PC-9 (cell line): ENCODE measurements at regions of chr9 and their contacts with region 1.

Region 1: DNA sequence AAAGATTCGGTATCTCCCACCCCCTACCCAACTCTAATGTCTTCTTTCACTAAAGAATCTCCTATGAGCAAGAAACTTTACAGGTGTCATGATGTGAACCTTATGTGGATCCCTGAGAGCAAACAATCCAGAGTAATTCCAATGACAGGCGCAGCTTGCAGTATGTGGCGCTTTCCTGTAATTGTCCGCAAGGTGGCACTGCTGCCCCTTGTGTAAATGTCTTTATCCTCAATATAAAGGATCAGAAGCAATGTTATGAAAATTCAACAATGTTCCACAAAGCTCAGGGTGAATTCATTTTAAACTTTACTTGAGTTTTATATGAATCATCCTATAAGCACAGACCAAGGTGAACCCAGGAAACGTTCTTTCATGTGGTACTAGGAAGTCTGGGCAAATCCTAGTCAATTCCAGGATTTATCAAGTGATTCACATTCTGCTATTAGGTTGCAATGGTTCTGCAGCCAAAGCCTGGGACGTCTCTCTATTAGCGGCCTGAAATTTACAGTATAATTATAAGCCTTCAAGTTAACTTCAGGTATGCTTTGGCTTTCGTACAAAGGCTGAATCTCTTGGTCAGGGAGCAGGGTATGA is 113.7 kb downstream of the TRPM6 start:
- DNase-seq: peak; percentile 46 to 70
- H3K4me3 ChIP-seq: no peak overlapping the region
- H3K27ac ChIP-seq: no peak overlapping the region
- H3K4me1 ChIP-seq: no peaks in the 10 kb centered on the region
- H3K27me3 ChIP-seq: no peaks in the 10 kb centered on the region
- CTCF ChIP-seq: peak; percentile 89

Region 2: DNA sequence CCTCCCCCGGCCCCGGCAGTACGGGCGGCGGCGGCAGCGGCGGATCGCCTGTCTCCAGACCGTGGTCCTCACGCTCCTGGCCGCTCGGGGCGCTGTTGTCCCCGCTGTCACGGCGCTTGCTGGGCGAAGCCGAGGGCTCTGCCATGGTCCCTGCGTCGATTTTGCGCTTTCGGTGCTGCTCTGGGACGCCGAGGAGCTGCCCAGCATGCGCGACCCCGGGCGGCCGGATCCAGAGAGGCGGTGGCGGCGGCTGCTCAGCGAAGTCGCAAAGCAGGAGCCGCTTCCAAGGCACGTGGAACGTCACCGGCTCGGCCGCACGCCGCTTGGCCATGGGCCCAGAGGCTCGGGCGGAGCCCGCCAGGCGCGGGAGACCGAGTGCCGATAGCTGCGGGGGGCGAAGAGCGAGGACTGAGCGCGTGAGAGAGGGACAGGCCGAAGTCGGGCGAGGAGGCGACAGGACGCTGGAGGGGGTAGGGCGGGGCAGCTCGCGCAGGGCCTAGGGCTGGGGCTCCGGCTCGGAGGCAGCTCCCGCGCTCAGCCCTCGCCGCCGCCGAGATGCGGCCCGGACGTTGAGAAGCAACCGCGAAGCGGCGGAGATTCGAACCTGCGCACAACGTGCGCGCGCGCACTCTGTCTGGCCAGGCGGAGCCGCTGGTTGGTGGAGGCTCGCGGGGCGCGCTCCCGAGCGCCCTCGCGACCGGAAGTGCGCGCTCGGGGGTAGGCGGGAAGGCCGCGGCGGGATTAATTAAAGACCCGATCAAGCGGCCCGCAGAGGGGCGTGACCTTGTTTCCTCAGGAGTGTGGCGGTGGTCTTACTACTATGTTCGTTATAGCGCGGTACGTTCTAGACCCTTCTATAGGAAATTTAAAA is 178.5 kb after region 1 on chr9 and contains the start of gene C9orf40:
- CTCF ChIA-PET with region 1: interaction called, 13 read pairs
- POLR2A ChIA-PET with region 1: no interaction called
- intact Hi-C with region 1: loop called (anchors 2 kb)
- DNase-seq: peak; percentile 66 to 89
- H3K4me3 ChIP-seq: peak within 1 kb of the TSS; percentile 97
- H3K27ac ChIP-seq: peak within 1 kb of the TSS; percentile 60
- H3K4me1 ChIP-seq: peaks cover 6% of the 10 kb centered on the region; the same call in 1 of the 2 replicates
- H3K27me3 ChIP-seq: no peaks in the 10 kb centered on the region
- CTCF ChIP-seq: peak; percentile 83
- total RNA-seq, gene C9orf40: 10.8 and 11.3 TPM in 2 replicates

Region 3: GRCh38 chr9:74983709-74984108 is 209.7 kb after region 1 on chr9:
- CTCF ChIA-PET with region 1: no interaction called
- POLR2A ChIA-PET with region 1: no interaction called
- intact Hi-C with region 1: loop called (anchors 5 kb)
- DNase-seq: no peak
- H3K4me3 ChIP-seq: no peak overlapping the region
- H3K27ac ChIP-seq: no peak overlapping the region
- H3K4me1 ChIP-seq: no peaks in the 10 kb centered on the region
- H3K27me3 ChIP-seq: no peaks in the 10 kb centered on the region
- CTCF ChIP-seq: no peak

Region 4: DNA sequence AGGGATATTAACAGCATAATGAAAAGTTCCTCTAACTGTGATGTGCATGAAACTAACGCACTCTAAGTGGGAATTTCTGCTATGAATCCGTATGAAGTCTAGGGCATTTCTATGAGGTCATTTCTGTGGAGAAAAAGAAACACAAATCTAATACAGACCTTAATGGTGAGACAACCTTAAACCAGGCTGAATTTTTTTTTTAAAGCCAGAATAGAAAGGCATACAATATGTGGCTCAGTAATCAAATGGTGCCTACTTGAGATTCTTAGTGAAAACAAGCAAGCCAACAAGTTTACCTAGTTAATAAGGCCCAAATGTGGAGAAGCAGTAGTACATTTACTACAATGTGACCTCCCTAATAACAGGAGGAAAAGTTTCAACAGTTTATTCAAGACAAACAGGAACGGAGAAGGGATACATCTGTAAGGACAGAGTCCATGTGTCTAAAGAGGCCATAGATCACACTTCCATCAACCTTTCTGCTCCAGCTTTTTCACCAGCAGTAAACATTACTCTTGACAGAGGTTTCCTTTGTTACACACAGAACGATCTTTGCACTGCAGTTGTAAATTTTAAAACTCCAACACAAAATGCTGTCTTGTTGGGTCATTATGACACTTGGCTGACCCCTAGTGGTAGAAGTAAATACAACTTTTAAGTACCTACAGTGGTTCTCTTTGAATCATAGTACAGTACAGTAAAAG is 227.9 kb after region 1 on chr9:
- CTCF ChIA-PET with region 1: interaction called, 6 read pairs
- POLR2A ChIA-PET with region 1: no interaction called
- intact Hi-C with region 1: loop called (anchors 1 kb)
- DNase-seq: peak; percentile 14 to 63
- H3K4me3 ChIP-seq: no peak overlapping the region
- H3K27ac ChIP-seq: no peak overlapping the region
- H3K4me1 ChIP-seq: no peaks in the 10 kb centered on the region
- H3K27me3 ChIP-seq: no peaks in the 10 kb centered on the region
- CTCF ChIP-seq: peak; percentile 87

Region 5: GRCh38 chr9:75185585-75186170 is 411.7 kb after region 1 on chr9:
- CTCF ChIA-PET with region 1: interaction called, 4 read pairs
- POLR2A ChIA-PET with region 1: no interaction called
- intact Hi-C with region 1: loop called (anchors 5 kb)
- DNase-seq: peak in 1 of 2 experiments; percentile 25
- H3K4me3 ChIP-seq: no peak overlapping the region
- H3K27ac ChIP-seq: no peak overlapping the region
- H3K4me1 ChIP-seq: peaks cover 14% of the 10 kb centered on the region
- H3K27me3 ChIP-seq: no peaks in the 10 kb centered on the region
- CTCF ChIP-seq: peak; percentile 63